ENCODE measurements at regions of chr10 and their contacts with region 1.

Region 1: DNA sequence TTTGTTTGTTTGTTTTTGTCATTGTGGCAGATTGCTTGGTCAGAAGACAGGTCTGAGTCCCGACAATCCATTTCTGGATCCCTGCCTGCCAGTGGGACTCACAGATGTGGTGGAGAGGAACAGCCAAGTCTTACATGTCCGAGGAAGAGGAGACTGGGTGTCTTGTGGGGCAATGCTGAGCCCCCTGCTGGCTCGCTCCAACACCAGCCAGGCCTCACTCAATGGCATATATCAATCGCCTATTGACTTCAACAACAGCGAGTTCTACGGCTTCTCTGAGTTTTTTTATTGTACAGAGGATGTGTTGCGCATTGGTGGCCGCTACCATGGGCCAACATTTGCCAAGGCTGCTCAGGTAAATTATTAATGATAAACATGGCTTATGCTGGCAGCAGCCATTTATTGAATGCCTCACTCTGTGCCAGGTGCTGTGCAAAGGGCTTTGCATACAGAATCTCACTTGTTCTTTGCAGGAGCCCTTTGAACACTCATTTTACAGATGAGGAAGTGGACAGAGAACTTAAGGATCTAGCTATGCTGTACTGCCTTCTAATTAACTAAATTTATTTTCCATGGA is 33.3 kb downstream of the COX15 start:
- DNase-seq: peak in 1 of 9 experiments; percentile 5
- ATAC-seq: no peak
- H3K4me3 ChIP-seq: no peak overlapping the region
- H3K4me3 Mint-ChIP-seq: no peak overlapping the region
- H3K27ac ChIP-seq: no peak overlapping the region
- H3K27ac Mint-ChIP-seq: no peak overlapping the region
- H3K4me1 ChIP-seq: no peaks in the 10 kb centered on the region
- H3K4me1 Mint-ChIP-seq: no peaks in the 10 kb centered on the region
- H3K27me3 ChIP-seq: no peaks in the 10 kb centered on the region
- H3K27me3 Mint-ChIP-seq: no peaks in the 10 kb centered on the region
- CTCF ChIP-seq: no peak

Region 2: DNA sequence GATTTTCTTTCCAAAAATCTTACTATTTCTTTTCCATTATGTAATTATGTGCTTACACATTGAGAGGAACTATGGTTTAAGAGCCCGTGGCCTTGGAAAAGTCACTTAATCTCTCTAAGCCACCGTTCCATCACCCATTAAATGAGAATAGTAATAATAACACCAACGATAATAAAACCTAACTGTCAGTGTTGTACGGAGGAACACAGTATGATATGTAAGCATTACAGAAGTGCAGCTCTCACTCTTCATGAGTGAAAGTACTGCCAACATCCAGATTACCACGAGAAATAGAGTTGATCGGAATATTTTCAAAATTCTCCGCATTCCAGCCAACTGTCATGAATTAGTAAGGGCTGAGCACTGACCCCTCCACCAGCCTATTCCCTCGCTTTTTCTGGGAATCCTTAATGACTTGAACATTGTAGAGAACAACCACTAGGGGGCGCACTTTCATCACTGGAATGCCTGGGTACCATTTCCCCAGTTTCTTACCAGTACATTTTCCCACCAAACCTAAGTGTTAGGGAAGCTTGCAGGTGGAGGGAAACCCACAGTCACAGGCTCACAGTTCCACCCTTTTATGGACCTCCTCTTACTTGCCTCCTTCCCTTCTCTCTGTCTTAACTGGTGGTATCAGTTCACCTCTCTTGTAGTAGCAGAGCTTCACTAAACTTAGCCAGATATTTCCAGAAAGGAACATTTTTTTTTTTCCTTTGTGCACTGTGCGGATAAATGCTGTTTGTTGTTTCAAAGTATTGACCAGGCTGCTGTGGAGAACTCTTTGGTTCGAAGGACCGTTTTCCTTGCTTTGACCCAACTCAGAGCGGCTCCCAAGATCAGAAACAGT is 138.1 kb before region 1 on chr10:
- CTCF ChIA-PET with region 1: interaction called, 3 read pairs
- POLR2A ChIA-PET with region 1: no interaction called
- intact Hi-C with region 1: loop called in 1 of 2 experiments (anchors 5 kb)
- DNase-seq: peak in 7 of 9 experiments; percentile 7 to 56 (median 45)
- ATAC-seq: no peak
- H3K4me3 ChIP-seq: no peak overlapping the region
- H3K4me3 Mint-ChIP-seq: no peak overlapping the region
- H3K27ac ChIP-seq: no peak overlapping the region
- H3K27ac Mint-ChIP-seq: no peak overlapping the region
- H3K4me1 ChIP-seq: no peaks in the 10 kb centered on the region
- H3K4me1 Mint-ChIP-seq: peaks cover 6% of the 10 kb centered on the region
- H3K27me3 ChIP-seq: no peaks in the 10 kb centered on the region
- H3K27me3 Mint-ChIP-seq: peaks cover 21% of the 10 kb centered on the region
- CTCF ChIP-seq: peak; percentile 74

Region 3: GRCh38 chr10:101535949-101536348 is 1837.4 kb after region 1 on chr10:
- CTCF ChIA-PET with region 1: no interaction called
- POLR2A ChIA-PET with region 1: no interaction called
- intact Hi-C with region 1: no loop called
- DNase-seq: no peak
- ATAC-seq: no peak
- H3K4me3 ChIP-seq: no peak overlapping the region
- H3K4me3 Mint-ChIP-seq: no peak overlapping the region
- H3K27ac ChIP-seq: no peak overlapping the region
- H3K27ac Mint-ChIP-seq: no peak overlapping the region
- H3K4me1 ChIP-seq: no peaks in the 10 kb centered on the region
- H3K4me1 Mint-ChIP-seq: no peaks in the 10 kb centered on the region
- H3K27me3 ChIP-seq: no peaks in the 10 kb centered on the region
- H3K27me3 Mint-ChIP-seq: no peaks in the 10 kb centered on the region
- CTCF ChIP-seq: no peak

Measured in CD8-positive, alpha-beta T cell (primary cell).